Cardiac septum (tissue), 1 donor: ENCODE measurements at regions of chr5 and their contacts with region 1.

Region 1: GRCh38 chr5:114789773-114790402 is 379.8 kb downstream of the TRIM36 start:
- DNase-seq: no peak

Region 2: DNA sequence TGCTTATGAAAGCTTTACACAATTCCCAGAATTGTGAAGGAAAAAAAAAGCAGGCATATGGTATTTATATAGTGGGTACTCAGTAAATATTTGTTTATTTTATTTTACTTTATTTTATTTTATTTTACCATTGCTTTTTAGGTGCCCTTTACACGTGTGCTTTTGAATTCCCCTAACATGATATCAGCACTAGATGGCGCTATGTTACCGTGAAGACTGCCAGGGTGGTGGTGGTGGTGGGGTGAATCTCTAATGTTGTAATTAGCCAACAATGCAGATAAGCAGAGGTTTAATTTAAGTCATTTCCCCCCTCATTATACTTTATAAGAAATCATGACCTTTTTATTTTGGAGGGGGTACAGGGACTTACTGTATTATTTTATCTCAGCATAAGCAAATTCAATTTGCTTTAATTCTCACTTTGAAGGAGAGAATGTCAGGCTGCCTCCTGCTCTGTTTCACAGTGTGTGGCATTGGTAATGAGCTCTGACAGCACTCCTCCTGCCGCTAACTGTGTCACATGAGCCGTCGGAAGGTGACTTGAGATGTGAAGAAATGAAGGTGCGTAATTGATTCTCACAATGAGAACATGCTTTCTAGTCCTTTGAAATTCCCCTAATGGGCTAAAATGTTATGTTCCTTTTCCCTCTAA is 1110.8 kb before region 1 on chr5:
- intact Hi-C with region 1: loop called (anchors 5 kb)
- DNase-seq: no peak